Activated CD8-positive, alpha-beta T cell treated with anti-CD3 and anti-CD28 coated beads, Interleukin-2, amount 10 ng/mL, durations not matched to agents 7 days and 5 days (primary cell): ENCODE measurements at regions of chr7 and their contacts with region 1.

Region 1: DNA sequence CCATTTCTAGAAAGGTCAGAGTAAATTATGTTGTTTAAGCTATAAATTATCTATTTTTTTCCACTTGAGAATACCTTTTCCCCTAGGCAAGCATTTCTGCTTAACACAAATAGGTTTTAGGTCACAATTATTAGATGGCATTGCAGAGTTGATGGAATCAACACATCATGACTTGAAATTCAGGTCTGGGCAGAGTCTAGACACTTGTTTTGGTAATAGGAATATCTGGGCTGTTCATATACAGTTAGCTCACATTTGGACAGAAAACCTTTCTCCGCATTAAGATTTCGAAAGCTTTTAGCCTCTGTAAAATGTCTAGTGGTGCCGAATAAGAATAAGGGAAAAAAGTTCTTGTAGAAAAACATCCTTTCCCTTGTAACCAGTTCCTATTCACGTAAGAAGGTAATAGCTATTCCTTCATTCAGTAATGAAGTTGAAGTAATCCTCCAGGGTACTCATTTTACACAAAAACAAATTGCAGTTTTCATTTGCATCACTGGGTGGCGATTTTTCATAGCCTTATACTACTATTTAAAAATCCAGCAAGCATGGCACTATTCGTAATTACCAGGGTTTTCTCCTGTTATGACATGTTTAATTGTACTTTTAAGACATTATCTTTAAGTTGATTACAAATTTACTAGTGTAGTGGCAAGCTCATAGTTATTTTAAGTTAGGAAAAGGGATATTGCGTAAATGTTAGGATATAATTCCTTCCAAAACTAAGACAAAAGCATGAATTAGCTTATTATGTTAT is 37.0 kb downstream of the RPA3 start:
- DNase-seq: peak; percentile 67
- ATAC-seq: peak; percentile 69
- H3K4me3 Mint-ChIP-seq: no peak overlapping the region
- H3K27ac Mint-ChIP-seq: no peak overlapping the region
- H3K4me1 Mint-ChIP-seq: peaks cover 19% of the 10 kb centered on the region
- H3K27me3 Mint-ChIP-seq: no peaks in the 10 kb centered on the region

Region 2: GRCh38 chr7:7640221-7641128 is 40.9 kb before region 1 on chr7 and contains the start of gene UMAD1:
- CTCF ChIA-PET with region 1: interaction called, 24 read pairs
- POLR2A ChIA-PET with region 1: no interaction called
- DNase-seq: peak; percentile 99
- ATAC-seq: peak; percentile 96
- H3K4me3 Mint-ChIP-seq: peak within 1 kb of the TSS; percentile 86
- H3K27ac Mint-ChIP-seq: peak within 1 kb of the TSS; percentile 97
- H3K4me1 Mint-ChIP-seq: peaks cover 33% of the 10 kb centered on the region
- H3K27me3 Mint-ChIP-seq: no peaks in the 10 kb centered on the region
- total RNA-seq, gene UMAD1: 11.9 to 12.3 TPM

Region 3: DNA sequence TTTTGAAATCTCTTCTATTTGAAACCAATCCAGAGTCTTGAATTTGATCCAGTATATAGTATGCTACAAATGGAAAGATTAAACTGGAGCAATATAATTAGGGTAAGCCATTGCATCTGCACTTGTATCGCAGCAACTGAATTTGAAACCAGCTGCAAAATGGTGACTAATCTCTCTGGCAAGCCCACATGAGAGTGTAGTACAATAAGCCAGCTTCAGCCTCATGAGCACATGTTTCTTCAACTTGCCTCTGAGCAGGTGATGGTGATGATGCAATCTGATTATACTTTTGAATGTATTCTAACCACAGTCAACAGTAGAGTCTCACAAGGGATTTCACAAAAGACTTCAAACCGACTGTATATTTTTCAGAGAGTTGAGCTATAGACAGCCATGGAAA is 37.9 kb after region 1 on chr7:
- CTCF ChIA-PET with region 1: interaction called, 21 read pairs
- POLR2A ChIA-PET with region 1: interaction called, 3 read pairs
- DNase-seq: peak; percentile 52
- ATAC-seq: peak; percentile 92
- H3K4me3 Mint-ChIP-seq: no peak overlapping the region
- H3K27ac Mint-ChIP-seq: peak overlapping the region; percentile 46
- H3K4me1 Mint-ChIP-seq: peaks cover 12% of the 10 kb centered on the region
- H3K27me3 Mint-ChIP-seq: no peaks in the 10 kb centered on the region

Region 4: DNA sequence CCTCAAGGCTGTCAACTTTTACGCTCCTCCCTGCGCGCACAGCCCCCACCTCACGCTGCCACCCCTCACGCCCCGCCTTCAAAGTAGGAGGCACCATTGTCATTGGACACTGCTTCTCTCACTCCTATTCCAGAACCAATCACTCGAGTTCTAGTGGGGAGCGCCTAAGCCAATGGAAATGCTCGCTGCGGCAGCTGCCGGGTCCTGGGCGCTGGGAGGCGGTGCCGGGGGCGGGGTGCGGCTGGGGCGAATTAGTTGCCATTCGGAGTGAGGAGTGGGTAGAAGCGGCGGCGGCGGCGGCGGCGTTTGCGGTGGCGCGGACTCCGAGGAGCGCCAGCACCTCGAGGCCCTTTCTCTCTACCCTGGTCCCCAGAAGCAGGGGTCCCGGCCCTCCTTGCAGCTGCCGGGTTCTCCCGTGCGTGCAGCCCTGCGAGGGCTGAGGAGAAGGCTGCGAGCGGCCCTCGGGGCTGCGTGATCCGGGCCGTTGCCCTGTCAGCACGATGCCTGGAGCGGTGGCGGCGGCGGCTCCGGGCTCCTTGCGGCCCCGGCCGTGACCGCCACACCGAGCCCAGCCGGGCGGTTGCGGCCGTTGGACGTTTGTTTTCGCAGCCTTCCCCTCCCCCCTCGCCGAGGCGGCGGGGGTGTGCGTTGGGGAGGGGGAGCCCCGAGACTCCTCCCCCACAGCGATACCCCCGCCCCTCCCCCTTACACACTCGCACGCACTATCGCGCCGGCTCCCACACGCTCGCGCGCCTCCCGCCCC is 287.4 kb after region 1 on chr7 and contains the start of gene GLCCI1:
- CTCF ChIA-PET with region 1: interaction called, 16 read pairs
- POLR2A ChIA-PET with region 1: interaction called, 4 read pairs
- DNase-seq: peak; percentile 97
- ATAC-seq: peak; percentile 95
- H3K4me3 Mint-ChIP-seq: peak within 1 kb of the TSS; percentile 79
- H3K27ac Mint-ChIP-seq: peak within 1 kb of the TSS; percentile 85
- H3K4me1 Mint-ChIP-seq: peaks cover 19% of the 10 kb centered on the region
- H3K27me3 Mint-ChIP-seq: no peaks in the 10 kb centered on the region
- total RNA-seq, gene GLCCI1: 17.5 to 17.7 TPM

Region 5: DNA sequence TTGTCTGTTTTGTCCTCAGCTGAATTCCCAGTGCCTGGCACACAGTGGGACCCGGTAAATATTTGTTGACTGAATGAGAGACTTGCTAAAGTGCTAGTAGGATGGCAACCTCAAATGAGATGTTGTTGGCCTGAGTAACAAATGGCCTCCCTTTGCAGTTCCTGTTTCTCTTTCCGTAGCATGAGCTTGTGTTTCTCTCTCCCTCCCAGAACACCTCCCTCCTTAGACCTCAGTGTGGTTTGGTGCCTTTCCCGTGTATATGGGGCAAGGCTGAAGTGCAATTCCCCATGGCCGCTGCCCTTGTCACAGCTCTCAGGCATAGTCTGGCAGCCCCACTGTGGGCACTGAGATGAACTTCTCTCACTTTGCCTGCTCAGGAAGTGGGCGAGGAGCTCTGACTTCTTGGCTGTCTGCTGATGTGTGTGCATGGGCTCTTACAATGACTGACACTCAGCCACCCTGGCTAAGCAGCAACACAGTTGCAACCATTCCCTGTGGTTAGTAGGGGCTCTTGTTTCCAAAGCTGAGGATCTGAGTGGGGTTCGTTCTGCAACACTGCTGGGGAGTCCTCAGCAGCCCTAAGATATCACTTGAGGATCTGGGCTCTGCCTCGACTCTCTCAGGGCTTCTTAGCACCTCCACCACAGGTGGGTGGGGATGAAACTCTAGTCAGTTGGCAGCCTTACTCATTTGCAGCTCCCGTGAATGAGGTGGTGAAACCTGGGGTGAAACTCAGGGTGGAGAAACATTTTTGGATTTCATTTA is 444.5 kb after region 1 on chr7:
- CTCF ChIA-PET with region 1: interaction called, 10 read pairs
- POLR2A ChIA-PET with region 1: no interaction called
- DNase-seq: peak; percentile 85
- ATAC-seq: peak; percentile 96
- H3K4me3 Mint-ChIP-seq: peak overlapping the region; percentile 57
- H3K27ac Mint-ChIP-seq: peak overlapping the region; percentile 99
- H3K4me1 Mint-ChIP-seq: peaks cover 76% of the 10 kb centered on the region
- H3K27me3 Mint-ChIP-seq: peaks cover 2% of the 10 kb centered on the region

Region 6: DNA sequence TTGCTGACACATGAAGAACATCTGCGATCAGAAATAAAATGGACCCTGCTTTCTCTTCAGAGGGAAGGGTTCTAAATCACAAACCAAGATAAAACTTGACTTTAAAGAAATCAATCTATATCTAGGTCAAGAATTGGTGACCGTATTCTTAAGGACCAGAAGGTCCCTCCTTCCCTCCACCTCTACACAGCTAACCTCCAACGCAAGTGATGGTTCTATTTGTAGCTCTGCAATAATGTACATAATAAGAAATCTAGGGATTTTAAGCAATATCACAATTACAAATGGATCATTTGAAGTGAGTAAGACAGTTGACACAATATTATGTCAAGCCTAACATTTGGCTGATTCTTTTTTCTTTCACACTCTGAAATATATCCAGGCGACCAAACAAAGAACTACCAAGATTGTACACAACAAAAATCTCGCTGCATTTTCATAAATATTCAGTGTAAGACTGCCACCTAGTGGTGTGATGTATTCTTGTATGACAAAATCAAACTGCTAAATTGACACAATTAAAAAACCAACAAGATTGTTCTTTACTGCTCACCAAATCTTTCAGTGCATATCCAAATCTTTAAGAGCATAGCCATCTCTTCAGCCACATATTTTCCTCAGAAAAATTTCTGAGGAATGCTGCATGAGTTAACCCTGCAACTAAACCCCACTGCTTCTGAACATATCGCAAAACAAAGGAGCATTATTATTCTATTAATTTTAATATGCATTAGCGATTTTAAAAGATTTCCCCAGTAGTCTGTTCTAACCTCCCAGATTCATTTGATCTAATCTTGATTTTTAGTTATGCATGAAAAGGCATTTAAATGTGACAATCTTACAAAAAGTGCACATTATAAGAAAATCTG is 536.1 kb after region 1 on chr7:
- CTCF ChIA-PET with region 1: interaction called, 68 read pairs
- POLR2A ChIA-PET with region 1: no interaction called
- DNase-seq: peak; percentile 58
- ATAC-seq: no peak
- H3K4me3 Mint-ChIP-seq: no peak overlapping the region
- H3K27ac Mint-ChIP-seq: no peak overlapping the region
- H3K4me1 Mint-ChIP-seq: peaks cover 11% of the 10 kb centered on the region
- H3K27me3 Mint-ChIP-seq: peaks cover 16% of the 10 kb centered on the region